ENCODE measurements at regions of chr4 and their contacts with region 1.

Region 1: DNA sequence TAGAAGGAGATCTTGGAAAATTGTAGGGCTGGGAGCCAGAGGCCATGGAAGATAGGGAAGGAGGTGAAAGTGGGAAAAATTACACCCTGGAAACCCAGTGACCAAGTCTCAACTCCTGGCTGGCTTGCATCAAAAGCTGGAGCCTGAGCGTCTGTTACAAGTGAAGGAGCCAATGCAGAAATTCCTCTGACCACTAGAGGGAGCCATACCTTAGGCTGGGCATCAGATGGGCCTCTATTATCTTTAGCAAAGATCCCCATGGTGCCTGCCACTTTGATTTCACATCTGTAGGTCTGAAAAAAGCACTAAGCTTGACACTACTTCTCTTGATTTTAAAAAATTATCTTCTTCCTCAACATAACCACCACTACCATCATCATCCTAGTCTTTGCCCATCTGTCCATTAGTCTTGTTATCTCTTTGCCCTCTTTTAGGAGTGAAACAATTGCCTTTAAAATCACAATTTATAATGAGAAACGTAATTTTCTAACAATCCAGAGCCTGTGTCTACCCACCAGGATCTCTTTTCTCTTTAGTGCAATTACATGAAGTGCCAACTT is 62.9 kb downstream of the ANAPC4 start:
- DNase-seq: peak; percentile 66
- H3K27ac ChIP-seq: no peak overlapping the region
- CTCF ChIP-seq: peak; percentile 85

Region 2: DNA sequence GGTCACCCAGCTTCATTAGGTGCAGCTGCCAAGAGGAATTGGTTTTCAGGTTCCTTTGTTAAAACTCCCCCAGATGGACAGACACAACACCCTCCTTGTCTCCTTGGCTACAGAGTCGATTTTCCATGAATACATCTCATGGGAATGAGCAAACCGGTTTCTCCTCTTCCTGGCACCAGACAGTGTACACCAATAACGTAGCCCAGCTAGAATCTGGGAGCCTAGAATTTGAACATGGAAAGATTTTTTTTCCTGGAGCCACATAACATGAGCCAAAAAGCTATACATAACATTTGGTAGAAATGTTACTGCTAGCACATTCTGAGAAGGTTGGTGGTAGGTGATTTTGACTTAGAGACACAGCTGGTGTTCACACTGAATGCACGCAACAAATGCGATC is 152.7 kb after region 1 on chr4:
- CTCF ChIA-PET with region 1: no interaction called
- POLR2A ChIA-PET with region 1: no interaction called
- DNase-seq: no peak
- H3K27ac ChIP-seq: no peak overlapping the region
- CTCF ChIP-seq: no peak

Region 3: DNA sequence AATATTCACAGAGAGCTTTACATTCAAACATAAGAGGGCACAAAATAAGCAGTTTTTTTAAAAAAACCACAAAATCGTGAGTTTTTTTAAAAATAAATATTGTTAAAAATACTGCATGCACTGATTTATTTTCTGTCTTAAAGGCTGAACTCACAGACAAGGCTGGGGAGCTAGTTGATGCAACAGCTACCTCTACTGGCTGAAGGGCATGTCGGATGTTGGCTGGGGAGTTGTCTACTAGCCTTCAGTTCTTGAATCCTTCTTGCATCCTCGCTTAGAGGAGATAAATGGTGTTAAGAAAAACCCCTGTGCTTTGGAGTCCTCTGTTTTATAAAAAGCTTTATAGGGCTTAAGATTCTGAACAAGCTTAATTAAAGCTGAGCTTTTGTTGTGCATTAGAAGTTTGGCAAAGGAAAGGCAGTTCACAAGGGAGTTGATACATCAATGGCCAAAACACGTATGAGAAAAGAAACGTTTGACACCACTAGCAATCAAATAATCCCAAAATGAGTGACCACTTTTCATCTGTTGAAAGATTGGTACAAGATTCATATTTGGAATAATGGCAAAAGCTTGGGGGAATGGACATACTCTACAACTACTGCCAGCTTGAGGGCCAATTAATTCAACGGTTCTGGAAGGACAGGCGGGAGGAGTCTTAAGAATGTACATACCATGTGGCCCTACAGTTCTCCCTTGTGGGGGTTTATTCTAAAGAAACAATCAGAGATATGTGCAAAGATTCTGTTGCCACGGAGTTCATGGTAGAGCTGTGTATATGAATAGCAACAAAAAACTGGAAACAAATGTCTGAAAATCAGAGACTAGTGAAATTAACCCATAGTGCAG is 328.1 kb after region 1 on chr4:
- CTCF ChIA-PET with region 1: interaction called, 42 read pairs
- POLR2A ChIA-PET with region 1: no interaction called
- DNase-seq: peak; percentile 70
- H3K27ac ChIP-seq: no peak overlapping the region
- CTCF ChIP-seq: peak; percentile 79

Region 4: GRCh38 chr4:26081795-26082498 is 641.9 kb after region 1 on chr4:
- CTCF ChIA-PET with region 1: no interaction called
- POLR2A ChIA-PET with region 1: no interaction called
- DNase-seq: peak; percentile 35
- H3K27ac ChIP-seq: no peak overlapping the region
- CTCF ChIP-seq: peak; percentile 63